Activated T-helper 1 cell treated with anti-CD3 and anti-CD28 coated beads, Interleukin-12 subunit alpha, Interleukin-12 subunit beta, Interleukin-2, Interleukin-4 antibody, amounts not matched to agents 30 ng/mL and 10 ng/mL and 1 ng/mL, durations not matched to agents 14 hours and 24 hours and 36 hours (primary cell): ENCODE measurements at regions of chr4 and their contacts with region 1.

Region 1: GRCh38 chr4:147160908-147161513 is 215.3 kb upstream of the TTC29 start:
- DNase-seq: no peak
- H3K4me3 Mint-ChIP-seq: no peak overlapping the region
- H3K27ac Mint-ChIP-seq: no peak overlapping the region
- H3K4me1 Mint-ChIP-seq: no peaks in the 10 kb centered on the region
- H3K27me3 Mint-ChIP-seq: peaks cover 20% of the 10 kb centered on the region

Region 2: GRCh38 chr4:147071209-147071740 is 89.7 kb before region 1 on chr4:
- intact Hi-C with region 1: no loop called
- DNase-seq: no peak
- H3K4me3 Mint-ChIP-seq: no peak overlapping the region
- H3K27ac Mint-ChIP-seq: no peak overlapping the region
- H3K4me1 Mint-ChIP-seq: no peaks in the 10 kb centered on the region
- H3K27me3 Mint-ChIP-seq: peaks cover 2% of the 10 kb centered on the region

Region 3: DNA sequence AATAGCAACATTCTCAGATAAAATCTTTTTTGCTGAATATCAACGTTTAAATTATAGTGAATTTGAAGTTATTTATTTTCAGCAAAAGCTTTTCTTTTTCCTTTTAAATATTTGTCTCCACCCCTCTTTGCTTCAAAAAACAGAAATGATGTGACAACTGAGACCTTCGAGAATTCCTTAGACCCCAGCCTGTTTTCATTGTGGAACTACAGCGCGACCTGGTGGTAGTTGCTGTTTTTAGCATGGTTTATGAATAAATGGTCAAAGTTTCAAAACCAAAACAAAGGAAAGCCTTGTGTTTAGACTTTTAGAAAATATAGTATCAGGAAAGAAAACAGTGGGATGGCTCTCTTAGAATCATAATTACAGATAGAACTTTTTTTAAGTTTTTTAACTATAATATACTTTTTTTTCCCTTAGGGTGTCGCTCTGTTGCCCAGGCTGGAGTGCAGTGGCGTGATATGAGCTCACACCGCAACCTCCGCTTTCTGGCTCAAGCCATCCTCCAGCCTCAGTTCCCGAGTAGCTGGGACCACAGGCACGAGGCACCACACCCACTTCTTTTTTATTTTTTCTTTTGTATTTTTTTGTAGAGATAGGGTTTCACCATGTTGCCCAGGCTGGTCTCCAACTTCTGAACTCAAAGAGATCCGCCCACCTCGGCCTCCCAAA is 429.4 kb after region 1 on chr4:
- intact Hi-C with region 1: loop called (anchors 1 kb)
- DNase-seq: no peak
- H3K4me3 Mint-ChIP-seq: no peak overlapping the region
- H3K27ac Mint-ChIP-seq: no peak overlapping the region
- H3K4me1 Mint-ChIP-seq: no peaks in the 10 kb centered on the region
- H3K27me3 Mint-ChIP-seq: peaks cover 15% of the 10 kb centered on the region